ENCODE measurements at regions of chr11 and their contacts with region 1.

Region 1: GRCh38 chr11:122505304-122506006 is 150.1 kb upstream of the UBASH3B start:
- DNase-seq: peak; percentile 80
- H3K27ac ChIP-seq: no peak overlapping the region
- CTCF ChIP-seq: peak; percentile 81

Region 2: GRCh38 chr11:122215244-122215992 is 290.0 kb before region 1 on chr11:
- CTCF ChIA-PET with region 1: interaction called, 12 read pairs
- POLR2A ChIA-PET with region 1: no interaction called
- DNase-seq: peak; percentile 69
- H3K27ac ChIP-seq: no peak overlapping the region
- CTCF ChIP-seq: peak; percentile 85

Measured in RWPE1 (cell line).